ENCODE measurements at regions of chr2 and their contacts with region 1.

Region 1: DNA sequence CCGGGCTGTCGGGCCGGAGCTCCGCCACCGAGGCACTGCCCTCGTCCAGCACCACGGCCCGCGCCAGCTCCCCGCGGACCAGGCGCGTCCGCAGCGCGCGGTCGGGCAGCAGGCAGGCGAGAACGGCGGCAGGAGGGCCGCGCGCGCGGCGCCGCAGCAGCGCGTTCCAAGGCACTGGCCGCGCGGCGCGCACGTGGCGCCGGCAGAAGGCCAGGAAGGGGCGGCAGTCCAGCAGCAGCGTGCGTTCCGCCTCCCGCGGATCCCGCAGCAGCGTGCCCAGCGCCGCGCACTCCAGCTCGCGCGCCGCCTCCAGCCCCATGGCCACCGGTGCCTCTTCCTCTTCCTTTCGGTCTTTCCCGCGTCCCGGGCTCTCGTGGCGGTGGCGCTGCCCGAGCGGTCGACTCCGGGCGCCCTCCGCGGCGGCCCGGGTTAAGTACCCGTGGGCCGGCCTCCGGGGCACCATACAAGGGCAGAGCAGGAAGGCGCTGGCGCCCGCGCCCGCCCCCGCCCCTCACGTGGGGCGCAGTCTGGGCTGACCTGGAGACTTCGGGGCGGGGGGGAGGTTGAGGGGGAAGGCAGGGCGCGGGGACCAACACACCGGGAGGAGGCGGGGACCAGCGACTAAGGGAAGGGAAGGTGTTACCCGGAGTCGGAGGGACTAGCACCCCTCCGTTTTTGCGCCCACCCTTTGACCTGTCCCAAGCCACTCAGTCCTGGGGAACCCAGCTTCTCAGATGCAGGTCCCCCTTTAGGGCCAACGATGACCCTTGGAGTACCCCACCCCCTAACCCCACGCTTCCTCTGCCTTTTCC is at the start of gene DUSP2:
- DNase-seq: peak; percentile 82 to 89
- H3K4me3 ChIP-seq: peak within 1 kb of the TSS; percentile 76 to 78
- H3K27ac ChIP-seq: peak within 1 kb of the TSS; percentile 78 to 83
- H3K4me1 ChIP-seq: peaks cover 16 to 30% of the 10 kb centered on the region in 2 donors
- H3K27me3 ChIP-seq: no peaks in the 10 kb centered on the region
- CTCF ChIP-seq: peak in 2 of 3 experiments; percentile 10 to 18
- total RNA-seq, gene DUSP2: 7.2 TPM

Region 2: GRCh38 chr2:96175951-96176350 is 30.7 kb after region 1 on chr2:
- intact Hi-C with region 1: no loop called
- DNase-seq: no peak
- H3K4me3 ChIP-seq: no peak overlapping the region
- H3K27ac ChIP-seq: no peak overlapping the region
- H3K4me1 ChIP-seq: no peaks in the 10 kb centered on the region
- H3K27me3 ChIP-seq: no peaks in the 10 kb centered on the region
- CTCF ChIP-seq: no peak

Region 3: GRCh38 chr2:96208143-96209010 is 63.1 kb after region 1 on chr2 and contains the start of gene STARD7:
- intact Hi-C with region 1: loop called (anchors 1 kb)
- DNase-seq: peak; percentile 93 to 99
- H3K4me3 ChIP-seq: peak within 1 kb of the TSS; percentile 92 to 99
- H3K27ac ChIP-seq: peak within 1 kb of the TSS; percentile 92 to 97
- H3K4me1 ChIP-seq: peaks cover 12 to 39% of the 10 kb centered on the region in 2 donors
- H3K27me3 ChIP-seq: no peaks in the 10 kb centered on the region
- CTCF ChIP-seq: peak in 1 of 3 experiments; percentile 3
- total RNA-seq, gene STARD7: 85.6 TPM

Region 4: DNA sequence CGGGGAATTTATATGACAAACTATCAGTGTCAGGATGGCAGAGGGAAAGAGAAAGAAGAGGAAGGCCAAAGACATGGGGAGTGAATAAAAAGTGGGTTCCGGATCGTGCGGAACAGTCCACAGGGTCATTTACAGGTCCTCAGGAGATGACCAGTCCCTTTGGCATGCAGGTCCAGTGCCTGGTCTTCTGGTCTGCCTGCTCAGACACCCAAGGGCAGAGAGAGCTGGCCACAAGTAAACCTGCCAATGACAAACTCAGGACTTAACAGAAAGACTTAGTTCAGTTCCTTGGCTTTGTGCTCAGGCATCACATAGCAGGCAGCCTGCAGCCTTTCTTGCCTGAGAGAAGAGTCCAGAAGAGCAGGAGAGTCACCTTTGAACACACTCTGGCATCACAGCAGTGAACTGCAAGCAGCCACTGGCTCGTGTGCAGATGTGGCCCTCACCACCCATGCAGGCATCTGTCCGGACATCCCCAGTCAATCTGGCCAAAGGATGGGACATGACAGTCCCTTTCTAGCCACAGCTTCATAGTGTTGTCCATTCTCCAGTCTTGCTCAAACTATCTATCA is 106.6 kb after region 1 on chr2:
- intact Hi-C with region 1: loop called (anchors 5 kb)
- DNase-seq: peak; percentile 75 to 95
- H3K4me3 ChIP-seq: peak overlapping the region; percentile 31 to 34
- H3K27ac ChIP-seq: peak overlapping the region; percentile 68 to 81
- H3K4me1 ChIP-seq: peaks cover 0 to 30% of the 10 kb centered on the region in 2 donors
- H3K27me3 ChIP-seq: no peaks in the 10 kb centered on the region
- CTCF ChIP-seq: no peak

Measured in ascending aorta (tissue), 2 donors.